GM12878 (cell line): ENCODE measurements at regions of chr1 and their contacts with region 1.

Region 1: GRCh38 chr1:29171089-29171488 is 10.6 kb downstream of the SRSF4 start:
- DNase-seq: peak; percentile 20
- ATAC-seq: peak; percentile 64
- H3K4me3 ChIP-seq: peak overlapping the region; percentile 20; the same call in 1 of the 2 replicates
- H3K27ac ChIP-seq: no peak overlapping the region; the same call in 1 of the 2 replicates
- H3K4me1 ChIP-seq: peaks cover 5% of the 10 kb centered on the region; the same call in 1 of the 2 replicates
- H3K27me3 ChIP-seq: no peaks in the 10 kb centered on the region
- CTCF ChIP-seq: no peak
- EP300 ChIP-seq: no peak
- POLR2A ChIP-seq: no peak
- RAD21 ChIP-seq: no peak

Region 2: GRCh38 chr1:29156543-29157268 is 14.4 kb before region 1 on chr1:
- CTCF ChIA-PET with region 1: interaction called, 3 read pairs
- POLR2A ChIA-PET with region 1: interaction called, 5 read pairs
- RAD21 ChIA-PET with region 1: no interaction called
- SMC1A ChIA-PET with region 1: interaction called, 11 read pairs
- in situ Hi-C with region 1: no loop called
- intact Hi-C with region 1: no loop called
- DNase-seq: no peak
- ATAC-seq: no peak
- H3K4me3 ChIP-seq: no peak overlapping the region
- H3K27ac ChIP-seq: no peak overlapping the region
- H3K4me1 ChIP-seq: no peaks in the 10 kb centered on the region
- H3K27me3 ChIP-seq: no peaks in the 10 kb centered on the region
- CTCF ChIP-seq: no peak
- EP300 ChIP-seq: no peak
- POLR2A ChIP-seq: no peak
- RAD21 ChIP-seq: no peak